Activated B cell treated with CpG ODN at 0.5 μM for 24 hours (primary cell): ENCODE measurements at regions of chr6 and their contacts with region 1.

Region 1: GRCh38 chr6:291697-292505 is at the start of gene DUSP22:
- DNase-seq: peak; percentile 95
- ATAC-seq: peak; percentile 63
- H3K4me3 Mint-ChIP-seq: peak within 1 kb of the TSS; percentile 97
- H3K27ac Mint-ChIP-seq: peak within 1 kb of the TSS; percentile 93
- H3K4me1 Mint-ChIP-seq: peaks cover 61% of the 10 kb centered on the region
- H3K27me3 Mint-ChIP-seq: no peaks in the 10 kb centered on the region
- CTCF ChIP-seq: no peak
- total RNA-seq, gene DUSP22: 137 and 153 TPM in 2 replicates

Region 2: DNA sequence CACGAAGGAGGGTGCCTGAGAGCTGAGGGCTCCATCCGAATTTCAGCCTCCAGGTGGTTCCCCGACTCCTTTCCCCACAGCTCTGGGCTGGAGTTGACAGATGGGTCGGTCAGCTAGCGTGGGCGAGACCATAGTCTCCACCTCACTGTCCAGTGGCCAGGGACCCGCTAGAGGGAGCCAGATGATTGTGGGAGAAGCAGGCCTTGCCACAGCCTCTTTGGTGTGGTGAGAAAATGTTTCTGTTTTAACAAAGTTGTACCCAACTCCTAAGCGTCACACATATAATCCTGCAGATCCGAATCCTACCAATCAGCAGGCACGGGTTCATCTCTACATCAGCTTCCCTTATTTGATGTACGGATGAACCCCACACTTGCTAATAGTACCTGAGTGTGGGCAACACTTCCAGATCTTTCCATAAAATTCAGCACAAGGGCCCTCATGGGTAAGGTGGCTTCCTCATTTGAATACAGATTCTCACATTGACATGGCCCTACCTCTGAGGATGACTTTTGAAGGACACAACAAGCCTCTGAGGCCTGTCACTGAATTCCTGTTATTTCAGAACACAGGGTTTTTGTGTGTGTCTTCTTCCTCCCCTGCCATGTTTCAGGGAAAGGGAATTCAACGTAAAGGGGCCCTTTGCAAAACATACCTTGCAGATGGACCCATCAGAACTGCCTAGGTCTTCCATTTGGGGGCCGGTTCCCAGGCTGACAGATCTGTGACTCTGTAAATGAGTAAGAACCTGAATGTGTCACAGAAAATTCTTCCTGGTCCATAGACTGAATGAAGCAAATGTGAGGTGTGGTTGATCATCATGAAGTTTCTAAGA is 102.9 kb before region 1 on chr6:
- CTCF ChIA-PET with region 1: interaction called, 10 read pairs
- POLR2A ChIA-PET with region 1: interaction called, 13 read pairs
- intact Hi-C with region 1: loop called (anchors 1 kb)
- DNase-seq: peak; percentile 63
- ATAC-seq: peak; percentile 69
- H3K4me3 Mint-ChIP-seq: peak overlapping the region; percentile 28
- H3K27ac Mint-ChIP-seq: peak overlapping the region; percentile 85
- H3K4me1 Mint-ChIP-seq: peaks cover 86% of the 10 kb centered on the region
- H3K27me3 Mint-ChIP-seq: no peaks in the 10 kb centered on the region
- CTCF ChIP-seq: no peak

Region 3: GRCh38 chr6:235763-236360 is 56.0 kb before region 1 on chr6:
- CTCF ChIA-PET with region 1: interaction called, 3 read pairs
- POLR2A ChIA-PET with region 1: interaction called, 4 read pairs
- intact Hi-C with region 1: loop called (anchors 1 kb)
- DNase-seq: no peak
- ATAC-seq: peak; percentile 86
- H3K4me3 Mint-ChIP-seq: peak overlapping the region; percentile 66
- H3K27ac Mint-ChIP-seq: peak overlapping the region; percentile 83
- H3K4me1 Mint-ChIP-seq: peaks cover 32% of the 10 kb centered on the region
- H3K27me3 Mint-ChIP-seq: no peaks in the 10 kb centered on the region
- CTCF ChIP-seq: no peak

Region 4: GRCh38 chr6:313087-313486 is 21.2 kb after region 1 on chr6:
- CTCF ChIA-PET with region 1: interaction called, 8 read pairs
- POLR2A ChIA-PET with region 1: interaction called, 41 read pairs
- intact Hi-C with region 1: loop called (anchors 1 kb)
- DNase-seq: peak; percentile 15
- ATAC-seq: peak; percentile 78
- H3K4me3 Mint-ChIP-seq: peak overlapping the region; percentile 53
- H3K27ac Mint-ChIP-seq: peak overlapping the region; percentile 90
- H3K4me1 Mint-ChIP-seq: peaks cover 95% of the 10 kb centered on the region
- H3K27me3 Mint-ChIP-seq: no peaks in the 10 kb centered on the region
- CTCF ChIP-seq: no peak

Region 5: GRCh38 chr6:356828-357251 is 64.9 kb after region 1 on chr6:
- CTCF ChIA-PET with region 1: no interaction called
- POLR2A ChIA-PET with region 1: interaction called, 13 read pairs
- intact Hi-C with region 1: loop called (anchors 1 kb)
- DNase-seq: no peak
- ATAC-seq: peak; percentile 85
- H3K4me3 Mint-ChIP-seq: peak overlapping the region; percentile 68
- H3K27ac Mint-ChIP-seq: peak overlapping the region; percentile 93
- H3K4me1 Mint-ChIP-seq: peaks cover 73% of the 10 kb centered on the region
- H3K27me3 Mint-ChIP-seq: no peaks in the 10 kb centered on the region
- CTCF ChIP-seq: no peak

Region 6: GRCh38 chr6:399785-400534 is 108.1 kb after region 1 on chr6:
- CTCF ChIA-PET with region 1: interaction called, 5 read pairs
- POLR2A ChIA-PET with region 1: interaction called, 152 read pairs
- intact Hi-C with region 1: no loop called
- DNase-seq: no peak
- ATAC-seq: peak; percentile 51
- H3K4me3 Mint-ChIP-seq: peak overlapping the region; percentile 29
- H3K27ac Mint-ChIP-seq: peak overlapping the region; percentile 69
- H3K4me1 Mint-ChIP-seq: peaks cover 93% of the 10 kb centered on the region
- H3K27me3 Mint-ChIP-seq: no peaks in the 10 kb centered on the region
- CTCF ChIP-seq: no peak

Region 7: DNA sequence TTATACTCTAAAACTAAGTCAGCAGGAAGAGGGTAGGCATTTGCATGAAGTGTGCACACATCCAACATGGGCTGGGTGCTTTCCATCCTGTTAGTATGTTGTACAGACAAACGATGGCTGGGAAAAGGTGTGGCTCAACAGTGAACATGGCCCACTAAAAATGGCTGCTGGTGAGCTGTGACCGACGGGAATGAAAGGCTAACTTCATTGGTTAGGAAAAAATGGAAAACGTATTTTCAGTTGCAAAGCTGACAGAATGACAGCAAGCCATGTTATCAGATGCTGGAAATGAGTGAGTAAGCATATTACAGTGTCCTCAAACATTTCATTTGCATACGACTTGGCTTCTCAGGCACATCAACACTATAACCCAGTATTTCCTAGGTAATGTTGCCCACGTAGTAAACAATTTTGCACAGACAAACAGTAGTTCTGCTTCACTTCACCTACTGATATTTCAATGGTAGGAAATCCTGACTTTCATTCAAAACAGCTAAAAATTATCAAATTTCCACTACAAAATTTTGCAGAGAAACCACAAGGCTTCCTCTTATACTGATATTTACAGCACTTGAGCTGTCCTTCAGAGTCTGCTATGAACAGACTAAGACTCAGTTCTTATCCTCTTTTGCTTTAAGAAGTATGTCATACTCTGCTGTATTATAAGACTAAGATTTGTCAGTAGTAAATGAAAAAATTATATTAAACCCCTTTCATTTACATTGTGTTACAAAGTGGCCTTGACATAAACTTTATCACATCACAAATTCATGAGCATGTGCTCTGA is 198.5 kb after region 1 on chr6:
- CTCF ChIA-PET with region 1: no interaction called
- POLR2A ChIA-PET with region 1: interaction called, 6 read pairs
- intact Hi-C with region 1: loop called (anchors 2 kb)
- DNase-seq: no peak
- ATAC-seq: peak; percentile 35
- H3K4me3 Mint-ChIP-seq: peak overlapping the region; percentile 65
- H3K27ac Mint-ChIP-seq: peak overlapping the region; percentile 92
- H3K4me1 Mint-ChIP-seq: peaks cover 64% of the 10 kb centered on the region
- H3K27me3 Mint-ChIP-seq: no peaks in the 10 kb centered on the region
- CTCF ChIP-seq: no peak

Region 8: GRCh38 chr6:776528-776931 is 484.6 kb after region 1 on chr6:
- CTCF ChIA-PET with region 1: no interaction called
- POLR2A ChIA-PET with region 1: no interaction called
- intact Hi-C with region 1: no loop called
- DNase-seq: no peak
- ATAC-seq: no peak
- H3K4me3 Mint-ChIP-seq: no peak overlapping the region
- H3K27ac Mint-ChIP-seq: no peak overlapping the region
- H3K4me1 Mint-ChIP-seq: no peaks in the 10 kb centered on the region
- H3K27me3 Mint-ChIP-seq: peaks cover 22% of the 10 kb centered on the region
- CTCF ChIP-seq: no peak

Region 9: DNA sequence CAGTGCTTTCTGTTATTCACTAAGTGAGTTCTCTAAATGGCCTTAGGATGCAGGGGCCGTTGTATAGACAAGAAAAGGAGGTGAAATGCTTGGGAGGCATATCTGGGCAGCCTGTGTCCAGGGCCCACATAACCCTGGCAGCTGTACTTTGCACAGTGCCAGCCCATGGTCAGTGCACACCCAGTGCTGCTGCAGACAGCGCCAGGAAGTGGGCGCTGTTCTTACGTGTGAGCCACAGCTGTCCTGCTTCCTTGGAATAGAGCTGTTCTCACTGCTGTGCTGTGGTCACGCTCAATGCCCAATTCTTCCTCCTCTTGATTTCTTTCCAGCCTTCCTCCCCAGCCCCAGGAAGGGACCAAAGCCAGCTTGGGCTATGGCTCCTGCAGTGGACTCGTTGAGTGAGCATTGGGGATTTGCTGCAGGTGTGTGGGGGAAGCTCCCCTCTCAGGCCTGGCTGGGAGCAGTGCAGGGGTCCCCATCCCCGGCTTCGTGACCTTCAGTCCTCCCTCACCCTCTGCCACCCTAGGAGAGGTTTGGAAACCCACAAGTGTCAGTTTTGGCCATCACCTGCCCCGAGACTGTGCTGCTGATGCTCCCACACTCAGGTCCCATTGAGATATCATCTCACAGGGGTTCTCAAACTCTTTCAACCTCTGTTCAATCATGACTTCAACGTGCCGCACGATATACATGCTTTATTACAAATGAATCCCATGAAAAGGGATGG is 647.8 kb after region 1 on chr6:
- CTCF ChIA-PET with region 1: no interaction called
- POLR2A ChIA-PET with region 1: no interaction called
- intact Hi-C with region 1: no loop called
- DNase-seq: no peak
- ATAC-seq: no peak
- H3K4me3 Mint-ChIP-seq: no peak overlapping the region
- H3K27ac Mint-ChIP-seq: no peak overlapping the region
- H3K4me1 Mint-ChIP-seq: no peaks in the 10 kb centered on the region
- H3K27me3 Mint-ChIP-seq: peaks cover 13% of the 10 kb centered on the region
- CTCF ChIP-seq: no peak